ENCODE measurements at regions of chr16 and their contacts with region 1.

Region 1: DNA sequence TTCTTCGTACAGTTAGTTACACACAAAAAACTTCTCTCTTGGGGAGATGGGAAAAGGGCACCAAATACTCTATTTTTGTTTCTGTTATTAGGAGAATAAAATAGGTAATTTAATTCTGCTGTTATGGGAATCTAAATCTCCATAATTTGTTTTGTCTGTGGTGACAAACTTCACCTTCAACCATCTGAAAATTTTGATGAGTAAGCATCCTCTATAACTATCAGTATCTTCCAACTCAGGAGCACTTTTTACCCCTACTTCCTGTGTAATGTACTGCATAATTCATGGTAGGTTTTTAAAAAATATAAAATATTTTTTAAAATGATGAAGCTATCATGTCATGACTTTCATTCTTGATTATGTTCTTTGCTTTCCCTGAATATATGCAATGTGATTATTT is 33.6 kb upstream of the CNTNAP4 start:
- DNase-seq: no peak
- H3K4me3 Mint-ChIP-seq: no peak overlapping the region
- H3K27ac Mint-ChIP-seq: no peak overlapping the region
- H3K4me1 Mint-ChIP-seq: peaks cover 5% of the 10 kb centered on the region
- H3K27me3 Mint-ChIP-seq: no peaks in the 10 kb centered on the region
- CTCF ChIP-seq: no peak

Region 2: GRCh38 chr16:76213860-76214259 is 29.8 kb before region 1 on chr16:
- CTCF ChIA-PET with region 1: no interaction called
- POLR2A ChIA-PET with region 1: no interaction called
- intact Hi-C with region 1: loop called (anchors 1 kb)
- DNase-seq: no peak
- H3K4me3 Mint-ChIP-seq: no peak overlapping the region
- H3K27ac Mint-ChIP-seq: no peak overlapping the region
- H3K4me1 Mint-ChIP-seq: no peaks in the 10 kb centered on the region
- H3K27me3 Mint-ChIP-seq: no peaks in the 10 kb centered on the region
- CTCF ChIP-seq: no peak

Region 3: DNA sequence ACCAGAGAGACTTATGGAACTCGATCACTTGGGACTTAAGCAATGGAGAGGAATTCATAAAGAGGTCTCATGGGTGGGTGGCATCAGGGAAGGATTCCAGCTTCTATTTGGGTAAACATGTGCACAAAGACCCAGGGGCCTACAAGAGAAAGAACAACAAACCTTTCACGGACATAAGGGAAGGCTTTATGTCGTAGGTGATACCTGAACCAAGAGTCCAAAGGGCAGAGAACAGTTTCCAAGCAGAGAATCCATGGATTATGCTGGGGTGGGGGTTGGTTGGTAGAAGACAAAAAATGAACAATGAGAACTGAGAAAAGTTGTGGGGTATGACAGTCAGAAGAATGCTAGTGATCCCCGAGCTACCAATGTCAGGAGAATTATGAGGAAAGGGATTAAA is 153.4 kb after region 1 on chr16:
- CTCF ChIA-PET with region 1: no interaction called
- POLR2A ChIA-PET with region 1: no interaction called
- intact Hi-C with region 1: no loop called
- DNase-seq: no peak
- H3K4me3 Mint-ChIP-seq: no peak overlapping the region
- H3K27ac Mint-ChIP-seq: no peak overlapping the region
- H3K4me1 Mint-ChIP-seq: peaks cover 5% of the 10 kb centered on the region
- H3K27me3 Mint-ChIP-seq: no peaks in the 10 kb centered on the region
- CTCF ChIP-seq: no peak